ENCODE measurements at regions of chr1 and their contacts with region 1.

Region 1: DNA sequence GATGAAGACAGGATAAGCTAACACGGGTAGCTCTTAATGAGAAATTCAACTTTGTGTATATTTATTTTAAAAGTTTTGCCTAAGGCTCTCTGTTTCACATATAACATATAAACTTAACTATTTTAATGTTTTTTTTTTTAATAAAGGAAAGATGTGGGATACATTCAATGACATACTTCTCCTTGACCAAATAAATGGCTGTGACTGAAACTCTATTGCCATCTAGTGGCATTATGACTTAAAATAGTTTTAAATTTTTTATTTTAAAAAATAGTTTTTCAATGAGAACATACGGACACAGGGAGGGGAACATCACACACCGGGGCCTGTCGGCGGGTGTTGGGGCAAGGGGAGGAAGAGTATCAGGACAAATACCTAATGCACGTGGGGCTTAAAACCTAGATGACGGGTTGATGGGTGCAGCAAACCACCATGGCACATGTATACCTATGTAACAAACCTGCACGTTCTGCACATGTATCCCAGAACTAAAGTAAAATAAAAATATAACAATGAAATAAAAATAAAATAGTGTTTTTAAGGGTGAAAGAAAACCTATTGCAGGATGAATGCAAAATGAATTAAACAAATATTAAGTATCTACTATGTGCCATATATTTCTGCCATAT is 83.4 kb downstream of the LYST start:
- DNase-seq: peak; percentile 73
- H3K4me3 Mint-ChIP-seq: no peak overlapping the region
- H3K27ac Mint-ChIP-seq: no peak overlapping the region
- H3K4me1 Mint-ChIP-seq: peaks cover 10% of the 10 kb centered on the region
- H3K27me3 Mint-ChIP-seq: no peaks in the 10 kb centered on the region
- CTCF ChIP-seq: peak; percentile 72

Region 2: GRCh38 chr1:235442788-235443429 is 340.4 kb before region 1 on chr1:
- CTCF ChIA-PET with region 1: interaction called, 5 read pairs
- POLR2A ChIA-PET with region 1: no interaction called
- intact Hi-C with region 1: loop called (anchors 2 kb)
- DNase-seq: peak; percentile 80
- H3K4me3 Mint-ChIP-seq: no peak overlapping the region
- H3K27ac Mint-ChIP-seq: peak overlapping the region; percentile 74
- H3K4me1 Mint-ChIP-seq: peaks cover 19% of the 10 kb centered on the region
- H3K27me3 Mint-ChIP-seq: no peaks in the 10 kb centered on the region
- CTCF ChIP-seq: no peak

Region 3: GRCh38 chr1:235597867-235598553 is 185.3 kb before region 1 on chr1:
- CTCF ChIA-PET with region 1: interaction called, 26 read pairs
- POLR2A ChIA-PET with region 1: no interaction called
- intact Hi-C with region 1: loop called (anchors 2 kb)
- DNase-seq: peak; percentile 83
- H3K4me3 Mint-ChIP-seq: no peak overlapping the region
- H3K27ac Mint-ChIP-seq: no peak overlapping the region
- H3K4me1 Mint-ChIP-seq: no peaks in the 10 kb centered on the region
- H3K27me3 Mint-ChIP-seq: no peaks in the 10 kb centered on the region
- CTCF ChIP-seq: peak; percentile 70

Region 4: DNA sequence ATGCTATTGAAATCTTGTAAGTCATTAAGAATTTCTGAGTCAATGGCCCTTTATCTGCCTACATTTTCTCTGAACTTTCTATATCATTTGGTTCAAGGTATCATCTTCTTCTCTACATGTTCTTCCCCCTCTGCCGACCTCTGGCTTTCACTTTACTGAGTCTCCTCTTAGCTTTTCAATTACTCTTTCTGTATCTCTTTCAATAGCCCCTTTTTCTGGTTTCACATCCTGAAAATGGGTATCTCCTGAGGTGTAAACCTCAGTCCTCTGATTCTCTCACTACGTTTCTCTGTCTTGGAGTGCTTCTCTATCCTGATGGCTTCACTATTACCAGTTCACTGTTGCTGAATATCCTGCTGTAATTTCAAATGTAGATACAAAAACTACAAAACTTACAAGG is 15.5 kb before region 1 on chr1:
- CTCF ChIA-PET with region 1: interaction called, 21 read pairs
- POLR2A ChIA-PET with region 1: interaction called, 3 read pairs
- intact Hi-C with region 1: no loop called
- DNase-seq: no peak
- H3K4me3 Mint-ChIP-seq: no peak overlapping the region
- H3K27ac Mint-ChIP-seq: no peak overlapping the region
- H3K4me1 Mint-ChIP-seq: no peaks in the 10 kb centered on the region
- H3K27me3 Mint-ChIP-seq: no peaks in the 10 kb centered on the region
- CTCF ChIP-seq: no peak

Region 5: GRCh38 chr1:235843461-235843961 is 60.2 kb after region 1 on chr1:
- CTCF ChIA-PET with region 1: interaction called, 54 read pairs
- POLR2A ChIA-PET with region 1: no interaction called
- intact Hi-C with region 1: loop called (anchors 1 kb)
- DNase-seq: peak; percentile 76
- H3K4me3 Mint-ChIP-seq: no peak overlapping the region
- H3K27ac Mint-ChIP-seq: no peak overlapping the region
- H3K4me1 Mint-ChIP-seq: no peaks in the 10 kb centered on the region
- H3K27me3 Mint-ChIP-seq: no peaks in the 10 kb centered on the region
- CTCF ChIP-seq: peak; percentile 76

Region 6: DNA sequence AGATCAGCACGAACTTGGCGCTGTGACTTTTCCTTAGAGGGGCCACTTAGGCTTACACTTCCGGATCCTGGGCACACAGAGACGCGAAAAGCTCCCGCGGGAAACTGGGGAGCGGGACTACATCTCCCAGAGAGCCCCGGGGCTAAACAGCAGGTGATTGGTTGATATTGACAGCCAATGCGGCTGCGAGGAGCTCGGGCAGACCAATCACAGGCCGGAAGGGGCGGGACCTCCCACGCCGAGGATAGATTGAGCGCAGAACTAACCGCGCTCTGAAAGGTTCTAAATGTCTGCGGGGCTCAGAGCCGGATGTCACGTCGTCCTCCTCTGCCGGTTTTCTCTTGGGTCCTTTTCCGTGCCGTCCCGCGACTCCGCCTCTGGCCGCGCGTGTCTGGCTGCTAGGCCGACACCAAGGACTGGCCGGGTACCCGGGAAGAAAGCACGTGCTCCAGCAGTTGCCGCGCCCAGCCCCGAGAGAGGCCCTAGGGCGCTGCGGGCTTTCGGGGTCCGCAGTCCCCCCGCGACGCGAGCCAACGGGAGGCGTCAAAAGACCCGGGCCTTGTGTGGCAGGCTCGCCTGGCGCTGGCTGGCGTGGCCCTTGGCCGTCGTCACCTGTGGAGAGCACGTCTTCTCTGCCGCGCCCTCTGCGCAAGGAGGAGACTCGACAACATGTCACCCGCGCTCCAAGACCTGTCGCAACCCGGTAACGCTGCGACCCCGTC is 1011.9 kb after region 1 on chr1 and contains the start of gene MTR:
- CTCF ChIA-PET with region 1: no interaction called
- POLR2A ChIA-PET with region 1: no interaction called
- intact Hi-C with region 1: no loop called
- DNase-seq: peak; percentile 100
- H3K4me3 Mint-ChIP-seq: peak within 1 kb of the TSS; percentile 93
- H3K27ac Mint-ChIP-seq: peak within 1 kb of the TSS; percentile 88
- H3K4me1 Mint-ChIP-seq: peaks cover 34% of the 10 kb centered on the region
- H3K27me3 Mint-ChIP-seq: peaks cover 15% of the 10 kb centered on the region
- CTCF ChIP-seq: no peak
- total RNA-seq, gene MTR: 54.6 and 59.1 TPM in 2 replicates